PC-9 (cell line): ENCODE measurements at regions of chr1 and their contacts with region 1.

Region 1: GRCh38 chr1:43853161-43853921 is 80.3 kb upstream of the ARTN start:
- DNase-seq: peak; percentile 79 to 83
- H3K4me3 ChIP-seq: no peak overlapping the region
- H3K27ac ChIP-seq: peak overlapping the region; percentile 54
- H3K4me1 ChIP-seq: peaks cover 31% of the 10 kb centered on the region
- H3K27me3 ChIP-seq: no peaks in the 10 kb centered on the region
- CTCF ChIP-seq: no peak

Region 2: GRCh38 chr1:43554444-43554992 is 298.8 kb before region 1 on chr1:
- CTCF ChIA-PET with region 1: no interaction called
- POLR2A ChIA-PET with region 1: no interaction called
- intact Hi-C with region 1: no loop called
- DNase-seq: peak in 1 of 2 experiments; percentile 40
- H3K4me3 ChIP-seq: no peak overlapping the region
- H3K27ac ChIP-seq: 0 out of 2 replicates have a peak overlapping the region, but pooled peaks have one; percentile 13
- H3K4me1 ChIP-seq: peaks cover 79% of the 10 kb centered on the region
- H3K27me3 ChIP-seq: no peaks in the 10 kb centered on the region
- CTCF ChIP-seq: peak; percentile 68

Region 3: DNA sequence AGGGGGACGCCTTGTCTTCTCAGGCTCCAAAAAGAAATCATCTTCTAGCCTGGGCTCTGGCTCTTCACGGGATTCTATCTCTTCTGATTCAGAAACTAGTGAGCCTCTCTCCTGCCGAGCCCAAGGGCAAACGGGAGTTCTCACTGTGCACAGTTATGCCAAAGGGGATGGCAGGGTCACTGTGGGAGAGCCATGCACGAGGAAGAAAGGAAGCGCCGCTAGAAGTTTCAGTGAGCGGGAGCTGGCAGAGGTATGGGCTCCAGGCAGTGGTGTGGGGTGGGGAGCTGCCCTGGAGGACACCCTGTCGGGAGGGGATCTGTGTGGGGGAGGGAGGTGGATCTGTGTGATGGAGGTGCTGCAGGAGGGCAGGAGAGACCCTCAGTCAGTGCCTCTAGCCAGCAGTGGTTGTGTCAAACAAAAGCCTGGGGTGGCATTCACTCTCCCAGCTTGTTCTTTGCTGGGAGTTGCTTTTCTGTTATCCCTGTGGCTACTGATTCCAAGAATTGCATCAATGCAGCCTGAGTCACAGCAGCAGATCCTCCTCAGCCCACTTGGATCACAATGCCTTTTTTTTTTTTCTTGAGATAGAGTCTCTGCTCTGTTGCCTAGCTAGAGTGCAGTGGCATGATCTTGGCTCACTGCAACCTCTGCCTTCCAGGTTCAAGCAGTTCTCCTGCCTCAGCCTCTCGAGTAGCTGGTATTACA is 181.6 kb before region 1 on chr1:
- CTCF ChIA-PET with region 1: no interaction called
- POLR2A ChIA-PET with region 1: no interaction called
- intact Hi-C with region 1: no loop called
- DNase-seq: no peak
- H3K4me3 ChIP-seq: no peak overlapping the region
- H3K27ac ChIP-seq: no peak overlapping the region
- H3K4me1 ChIP-seq: no peaks in the 10 kb centered on the region
- H3K27me3 ChIP-seq: no peaks in the 10 kb centered on the region
- CTCF ChIP-seq: no peak

Region 4: DNA sequence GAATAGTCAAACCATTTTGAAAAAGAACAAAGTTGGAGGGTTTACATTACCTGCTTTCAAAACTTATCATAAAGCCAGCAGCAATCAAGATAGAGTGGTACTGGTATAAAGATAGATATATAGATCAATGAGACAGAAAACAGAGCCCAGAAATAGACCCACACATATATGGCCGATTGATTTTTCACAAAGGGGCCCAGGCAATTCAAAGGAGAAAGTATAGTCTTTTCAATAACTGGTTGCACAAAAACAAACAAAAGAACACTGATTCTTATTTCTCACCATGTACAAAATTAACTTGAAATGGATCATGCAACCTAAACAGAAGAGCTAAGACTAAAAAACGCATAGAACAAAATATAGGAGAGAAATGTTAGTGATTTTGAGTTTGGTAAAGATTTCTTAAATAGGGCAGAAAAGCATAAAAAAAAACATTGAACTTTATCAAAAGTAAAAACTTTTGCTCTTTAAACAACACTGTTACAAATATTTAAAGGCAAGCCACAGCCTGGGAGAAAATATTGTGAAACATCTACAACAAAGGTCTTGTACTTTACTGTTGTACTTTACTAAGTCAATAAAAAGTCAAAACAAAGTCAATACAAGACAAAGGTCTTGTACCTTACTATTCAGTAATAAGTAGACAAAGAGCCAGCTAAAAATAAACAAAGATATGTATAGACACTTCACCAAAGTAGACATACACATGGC is 95.8 kb before region 1 on chr1:
- CTCF ChIA-PET with region 1: no interaction called
- POLR2A ChIA-PET with region 1: no interaction called
- intact Hi-C with region 1: no loop called
- DNase-seq: no peak
- H3K4me3 ChIP-seq: no peak overlapping the region
- H3K27ac ChIP-seq: no peak overlapping the region
- H3K4me1 ChIP-seq: no peaks in the 10 kb centered on the region
- H3K27me3 ChIP-seq: no peaks in the 10 kb centered on the region
- CTCF ChIP-seq: no peak

Region 5: GRCh38 chr1:43774359-43774758 is 79.0 kb before region 1 on chr1:
- CTCF ChIA-PET with region 1: no interaction called
- POLR2A ChIA-PET with region 1: no interaction called
- intact Hi-C with region 1: loop called (anchors 2 kb)
- DNase-seq: peak; percentile 25 to 58
- H3K4me3 ChIP-seq: no peak overlapping the region
- H3K27ac ChIP-seq: peak overlapping the region; percentile 44
- H3K4me1 ChIP-seq: peaks cover 30% of the 10 kb centered on the region
- H3K27me3 ChIP-seq: no peaks in the 10 kb centered on the region
- CTCF ChIP-seq: no peak

Region 6: DNA sequence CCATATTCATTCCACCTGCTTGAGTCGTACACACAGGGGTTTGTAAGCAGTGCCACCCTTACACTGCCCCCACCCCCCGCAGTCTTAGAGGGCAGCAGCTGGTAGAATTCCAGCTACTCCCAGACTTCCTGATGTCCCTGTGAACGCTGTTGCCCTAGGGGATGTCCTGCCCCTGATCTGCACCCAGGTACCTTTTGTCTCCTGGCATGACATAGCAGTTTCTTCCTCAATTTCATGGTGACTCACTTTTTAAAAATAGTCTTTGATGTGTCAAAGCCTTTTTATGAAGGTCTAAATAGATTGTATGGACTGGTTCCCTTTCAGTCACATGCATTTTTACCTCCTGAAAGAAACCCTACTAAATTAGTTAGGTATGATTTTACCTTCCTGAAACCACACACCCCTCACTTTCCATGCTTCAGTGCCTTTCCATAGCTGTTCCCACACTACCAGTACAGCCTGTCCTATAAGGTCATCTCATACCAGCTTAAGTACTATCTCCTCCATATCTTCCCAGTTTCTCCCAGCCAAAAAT is 69.6 kb before region 1 on chr1:
- CTCF ChIA-PET with region 1: interaction called, 5 read pairs
- POLR2A ChIA-PET with region 1: interaction called, 5 read pairs
- intact Hi-C with region 1: loop called (anchors 1 kb)
- DNase-seq: peak; percentile 93 to 98
- H3K4me3 ChIP-seq: no peak overlapping the region; the same call in 1 of the 2 replicates
- H3K27ac ChIP-seq: peak overlapping the region; percentile 99
- H3K4me1 ChIP-seq: peaks cover 48% of the 10 kb centered on the region
- H3K27me3 ChIP-seq: no peaks in the 10 kb centered on the region
- CTCF ChIP-seq: no peak

Region 7: DNA sequence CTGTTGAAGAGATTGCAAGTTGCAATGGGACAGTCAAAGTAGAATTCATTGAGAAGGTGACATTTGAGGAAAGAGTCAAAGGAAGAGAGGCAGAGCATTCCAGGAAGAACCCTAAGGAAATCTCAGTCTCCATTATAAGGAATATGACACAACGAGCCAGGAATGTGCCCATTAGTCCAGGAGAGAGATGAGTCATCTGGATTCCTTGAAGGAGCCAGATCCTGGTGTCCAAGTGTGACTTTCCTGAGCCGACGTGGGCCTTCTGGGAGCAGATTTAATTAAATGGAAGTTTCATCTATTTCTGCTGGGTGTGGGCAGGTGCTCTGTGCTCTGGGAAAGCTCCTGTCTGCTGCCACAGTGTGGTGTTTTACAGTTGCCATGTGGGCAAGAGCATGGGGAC is 31.3 kb before region 1 on chr1:
- CTCF ChIA-PET with region 1: no interaction called
- POLR2A ChIA-PET with region 1: interaction called, 5 read pairs
- intact Hi-C with region 1: loop called (anchors 1 kb)
- DNase-seq: peak; percentile 65 to 90
- H3K4me3 ChIP-seq: no peak overlapping the region
- H3K27ac ChIP-seq: peak overlapping the region; percentile 87
- H3K4me1 ChIP-seq: peaks cover 41% of the 10 kb centered on the region
- H3K27me3 ChIP-seq: no peaks in the 10 kb centered on the region
- CTCF ChIP-seq: no peak

Region 8: GRCh38 chr1:43974443-43975248 is 121.3 kb after region 1 on chr1 and contains the start of gene ATP6V0B:
- CTCF ChIA-PET with region 1: no interaction called
- POLR2A ChIA-PET with region 1: interaction called, 3 read pairs
- intact Hi-C with region 1: loop called (anchors 1 kb)
- DNase-seq: peak; percentile 84 to 96
- H3K4me3 ChIP-seq: peak within 1 kb of the TSS; percentile 67
- H3K27ac ChIP-seq: peak within 1 kb of the TSS; percentile 38
- H3K4me1 ChIP-seq: peaks cover 46% of the 10 kb centered on the region
- H3K27me3 ChIP-seq: no peaks in the 10 kb centered on the region
- CTCF ChIP-seq: no peak
- total RNA-seq, gene ATP6V0B: 110 and 125 TPM in 2 replicates

Region 9: DNA sequence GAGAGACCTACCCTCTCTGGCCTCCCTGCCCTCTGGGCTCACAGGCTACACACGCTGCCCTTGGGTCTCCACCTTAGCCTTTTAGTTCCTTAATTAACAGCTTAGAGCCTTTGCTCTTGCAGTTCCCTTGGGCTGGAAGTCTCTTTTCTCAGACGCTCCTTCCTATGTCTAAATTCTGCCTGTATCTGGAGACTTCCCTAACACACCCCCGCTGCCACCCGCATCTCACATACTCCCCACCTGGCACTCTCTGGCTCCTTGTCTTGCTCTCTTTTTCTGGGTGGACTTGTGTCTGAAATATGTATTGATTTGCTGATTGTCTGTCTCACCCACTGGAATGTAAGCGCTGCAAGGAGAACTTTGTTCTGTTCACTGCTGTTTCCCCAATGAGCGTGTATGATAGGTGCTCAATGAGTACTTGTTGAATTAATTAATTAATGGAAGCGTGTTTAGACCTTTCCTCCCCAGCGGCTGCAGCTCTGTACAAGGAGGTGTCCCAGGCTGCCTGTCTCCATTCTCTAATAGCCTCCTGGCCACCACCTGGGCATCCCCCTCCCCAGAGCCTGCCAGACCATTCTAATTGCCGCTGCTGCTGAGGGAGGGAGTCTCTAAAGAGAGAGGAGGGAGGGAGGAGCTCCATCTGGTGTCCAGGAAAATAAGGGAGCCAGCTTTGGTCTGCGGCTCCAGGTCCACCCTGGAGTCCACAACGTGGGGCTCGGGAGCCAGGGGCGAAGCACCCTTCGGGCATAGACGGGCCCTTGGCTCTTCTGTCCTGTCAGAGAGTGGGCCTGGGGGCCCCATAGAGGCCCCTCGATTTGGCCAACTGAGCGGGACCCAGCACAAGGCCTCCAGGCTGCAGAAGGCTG is 647.1 kb after region 1 on chr1:
- CTCF ChIA-PET with region 1: no interaction called
- POLR2A ChIA-PET with region 1: no interaction called
- intact Hi-C with region 1: no loop called
- DNase-seq: no peak
- H3K4me3 ChIP-seq: no peak overlapping the region
- H3K27ac ChIP-seq: no peak overlapping the region
- H3K4me1 ChIP-seq: no peaks in the 10 kb centered on the region
- H3K27me3 ChIP-seq: no peaks in the 10 kb centered on the region
- CTCF ChIP-seq: no peak